Activated CD4-positive, alpha-beta T cell treated with anti-CD3 and anti-CD28 coated beads for 36 hours (primary cell): ENCODE measurements at regions of chr1 and their contacts with region 1.

Region 1: DNA sequence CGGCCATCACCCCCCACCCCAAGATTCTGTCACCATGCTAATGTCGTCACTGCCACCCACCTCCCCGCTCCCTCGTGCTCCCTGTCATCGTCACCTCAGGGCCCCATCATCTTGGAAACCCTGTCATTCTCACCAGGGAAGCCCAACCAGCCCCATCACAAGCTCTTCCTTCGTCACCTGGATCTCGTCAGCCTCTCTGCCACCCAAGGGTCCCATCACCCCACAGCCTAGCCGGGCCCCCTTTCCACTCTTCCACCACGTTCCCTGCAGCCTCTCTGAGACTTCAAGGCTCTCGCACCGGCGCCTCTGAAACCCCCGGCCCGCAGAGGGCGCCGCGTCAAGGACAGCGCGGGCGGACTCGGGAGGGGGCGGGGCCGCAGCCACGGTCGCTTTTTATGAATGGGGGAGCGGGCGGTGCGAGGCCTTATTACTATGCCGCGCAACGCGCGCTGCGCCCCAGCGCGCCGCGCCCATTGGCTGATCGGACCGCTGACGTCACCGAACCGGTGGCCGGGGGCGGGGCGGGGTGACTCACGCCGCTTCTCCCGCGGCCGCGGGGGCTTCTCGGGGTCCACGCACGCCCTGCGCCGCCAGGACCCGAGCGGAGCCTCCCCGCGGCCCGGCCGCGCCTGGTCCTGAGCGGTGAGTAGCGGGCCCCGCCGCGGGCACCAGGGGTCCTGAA is at the start of gene GPR3:
- DNase-seq: peak; percentile 97
- ATAC-seq: peak; percentile 91
- H3K4me3 Mint-ChIP-seq: peak within 1 kb of the TSS; percentile 70
- H3K27ac Mint-ChIP-seq: peak within 1 kb of the TSS; percentile 92
- H3K4me1 Mint-ChIP-seq: peaks cover 14% of the 10 kb centered on the region
- H3K27me3 Mint-ChIP-seq: no peaks in the 10 kb centered on the region
- total RNA-seq, gene GPR3: 1.1 to 1.3 TPM

Region 2: DNA sequence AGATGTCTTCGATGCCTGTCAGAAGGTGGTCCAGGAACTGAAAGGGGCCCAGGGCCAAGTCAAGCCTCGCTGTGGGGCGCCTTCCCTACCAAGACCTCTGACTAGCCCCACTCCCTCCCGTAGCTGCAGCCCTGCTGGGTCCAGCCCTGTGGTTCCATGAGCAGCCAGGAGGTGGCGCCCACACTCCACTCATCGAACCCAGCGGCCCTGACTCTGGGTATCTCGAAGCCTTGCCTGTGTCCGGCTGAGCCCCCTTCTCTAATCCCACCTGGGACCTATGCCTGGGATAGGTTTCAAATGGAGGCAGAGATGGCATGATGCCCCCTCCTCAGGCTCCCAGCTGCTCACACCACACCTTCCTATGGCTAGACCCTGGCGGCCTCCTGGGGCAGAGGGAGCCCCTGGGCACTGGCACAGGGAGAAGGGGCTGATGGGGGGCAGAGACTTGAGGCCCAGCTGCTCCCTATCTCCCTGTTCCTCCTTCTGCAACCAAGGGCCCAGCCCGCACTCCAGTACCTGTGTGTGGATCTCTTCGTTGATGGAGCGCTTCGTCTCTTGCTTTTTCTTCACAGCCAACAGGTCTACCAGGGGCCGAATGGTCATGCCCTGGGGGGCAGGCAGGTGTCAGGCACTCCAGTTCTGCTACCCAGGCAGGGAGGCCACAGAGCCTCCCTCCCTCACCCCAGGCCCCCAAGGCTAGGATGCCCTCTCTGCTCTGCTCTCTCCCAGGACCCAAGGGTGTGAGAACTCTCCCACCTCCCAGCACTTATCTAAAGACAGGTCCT is 289.3 kb before region 1 on chr1:
- CTCF ChIA-PET with region 1: no interaction called
- POLR2A ChIA-PET with region 1: no interaction called
- intact Hi-C with region 1: loop called in 1 of 2 experiments (anchors 2 kb)
- DNase-seq: peak; percentile 89
- ATAC-seq: peak; percentile 75
- H3K4me3 Mint-ChIP-seq: no peak overlapping the region
- H3K27ac Mint-ChIP-seq: no peak overlapping the region
- H3K4me1 Mint-ChIP-seq: peaks cover 23% of the 10 kb centered on the region
- H3K27me3 Mint-ChIP-seq: no peaks in the 10 kb centered on the region

Region 3: DNA sequence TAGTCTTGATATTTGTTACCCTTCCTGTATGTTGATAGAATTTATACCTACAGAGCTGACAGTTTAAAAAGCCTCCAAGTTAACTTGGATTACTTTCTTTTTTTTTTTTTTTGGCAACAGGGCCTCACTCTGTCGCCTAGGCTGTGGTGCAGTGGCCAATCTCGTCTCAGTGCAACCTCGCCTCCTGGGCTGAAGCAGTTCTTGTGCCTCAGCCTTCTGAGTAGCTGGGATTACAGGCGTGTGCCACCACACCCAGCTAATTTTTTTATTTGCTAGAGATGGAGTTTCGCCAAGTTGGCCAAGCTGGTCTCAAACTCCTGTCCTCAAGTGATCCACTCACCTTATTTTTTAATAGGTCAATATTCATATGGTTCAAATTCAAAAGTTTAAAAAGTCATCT is 125.1 kb before region 1 on chr1:
- CTCF ChIA-PET with region 1: no interaction called
- POLR2A ChIA-PET with region 1: no interaction called
- intact Hi-C with region 1: no loop called
- DNase-seq: no peak
- ATAC-seq: no peak
- H3K4me3 Mint-ChIP-seq: no peak overlapping the region
- H3K27ac Mint-ChIP-seq: no peak overlapping the region
- H3K4me1 Mint-ChIP-seq: peaks cover 3% of the 10 kb centered on the region
- H3K27me3 Mint-ChIP-seq: no peaks in the 10 kb centered on the region

Region 4: GRCh38 chr1:27321813-27322577 is 70.2 kb before region 1 on chr1 and contains the start of gene TMEM222:
- CTCF ChIA-PET with region 1: interaction called, 10 read pairs
- POLR2A ChIA-PET with region 1: no interaction called
- intact Hi-C with region 1: loop called in 1 of 2 experiments (anchors 1 kb)
- DNase-seq: peak; percentile 99
- ATAC-seq: peak; percentile 98
- H3K4me3 Mint-ChIP-seq: peak within 1 kb of the TSS; percentile 94
- H3K27ac Mint-ChIP-seq: peak within 1 kb of the TSS; percentile 90
- H3K4me1 Mint-ChIP-seq: peaks cover 41% of the 10 kb centered on the region
- H3K27me3 Mint-ChIP-seq: no peaks in the 10 kb centered on the region
- total RNA-seq, gene TMEM222: 27.5 to 31.2 TPM

Region 5: DNA sequence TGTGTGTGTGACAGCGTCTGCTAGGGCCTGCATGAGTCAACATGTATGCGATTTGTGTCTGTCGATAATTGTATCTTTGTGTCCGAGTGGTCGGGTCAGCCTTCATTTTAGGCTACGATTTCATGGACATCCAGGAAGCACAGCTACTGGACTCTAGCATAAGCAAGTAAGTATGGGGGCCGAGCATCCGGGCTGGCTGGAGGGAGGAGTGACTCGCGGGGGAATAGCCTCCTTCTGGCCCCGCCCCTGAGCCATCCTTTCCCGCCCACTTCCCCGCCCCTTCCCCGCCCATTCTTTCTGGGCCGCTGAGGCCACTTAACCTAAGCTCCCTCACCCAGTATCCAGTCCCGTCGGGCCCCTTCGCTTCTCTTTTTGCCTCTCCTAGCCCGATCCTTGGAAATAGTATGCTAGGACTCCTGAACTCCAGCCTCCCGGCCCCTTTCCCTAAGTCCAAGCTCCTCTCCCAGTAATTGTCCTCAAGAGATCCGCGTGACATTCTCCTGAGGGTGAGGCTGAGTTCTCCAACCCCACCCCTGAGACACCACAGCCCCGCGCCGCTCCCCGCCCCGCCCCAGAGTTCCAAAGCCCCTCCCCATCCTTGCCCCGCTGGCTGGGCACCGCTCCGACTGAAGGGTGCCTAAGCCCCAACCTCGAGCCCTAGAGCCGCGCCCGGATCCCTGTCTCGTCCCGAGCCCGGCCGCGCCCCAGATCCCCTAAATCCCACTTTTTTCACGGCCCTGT is 26.7 kb before region 1 on chr1:
- CTCF ChIA-PET with region 1: interaction called, 19 read pairs
- POLR2A ChIA-PET with region 1: interaction called, 3 read pairs
- intact Hi-C with region 1: loop called in 1 of 2 experiments (anchors 1 kb)
- DNase-seq: peak; percentile 92
- ATAC-seq: peak; percentile 68
- H3K4me3 Mint-ChIP-seq: peak overlapping the region; percentile 75
- H3K27ac Mint-ChIP-seq: peak overlapping the region; percentile 73
- H3K4me1 Mint-ChIP-seq: peaks cover 30% of the 10 kb centered on the region
- H3K27me3 Mint-ChIP-seq: no peaks in the 10 kb centered on the region

Region 6: GRCh38 chr1:27525296-27526272 is 133.3 kb after region 1 on chr1:
- CTCF ChIA-PET with region 1: interaction called, 16 read pairs
- POLR2A ChIA-PET with region 1: no interaction called
- intact Hi-C with region 1: no loop called
- DNase-seq: peak; percentile 87
- ATAC-seq: peak; percentile 53
- H3K4me3 Mint-ChIP-seq: peak overlapping the region; percentile 63
- H3K27ac Mint-ChIP-seq: peak overlapping the region; percentile 81
- H3K4me1 Mint-ChIP-seq: peaks cover 60% of the 10 kb centered on the region
- H3K27me3 Mint-ChIP-seq: no peaks in the 10 kb centered on the region

Region 7: GRCh38 chr1:27725374-27726173 is 333.3 kb after region 1 on chr1 and contains the start of gene FAM76A:
- CTCF ChIA-PET with region 1: no interaction called
- POLR2A ChIA-PET with region 1: no interaction called
- intact Hi-C with region 1: loop called in 1 of 2 experiments (anchors 1 kb)
- DNase-seq: peak; percentile 100
- ATAC-seq: peak; percentile 95
- H3K4me3 Mint-ChIP-seq: peak within 1 kb of the TSS; percentile 78
- H3K27ac Mint-ChIP-seq: peak within 1 kb of the TSS; percentile 93
- H3K4me1 Mint-ChIP-seq: peaks cover 15% of the 10 kb centered on the region
- H3K27me3 Mint-ChIP-seq: no peaks in the 10 kb centered on the region
- total RNA-seq, gene FAM76A: 7.4 to 8.1 TPM